Aorta (tissue), 5 donors: ENCODE measurements at regions of chr9 and their contacts with region 1.

Region 1: GRCh38 chr9:93134015-93134739 is at the start of gene NINJ1:
- DNase-seq: peak; percentile 83 to 91
- ATAC-seq: peak; percentile 90
- H3K4me3 ChIP-seq: peak within 1 kb of the TSS; percentile 64 to 87
- H3K27ac ChIP-seq: peak within 1 kb of the TSS; percentile 88 to 97
- H3K4me1 ChIP-seq: no peaks in the 10 kb centered on the region
- H3K27me3 ChIP-seq: no peaks in the 10 kb centered on the region
- total RNA-seq, gene NINJ1: 66.8 to 80.3 TPM

Region 2: GRCh38 chr9:92747459-92748232 is 386.5 kb before region 1 on chr9:
- intact Hi-C with region 1: no loop called
- DNase-seq: peak in 1 of 2 donors; percentile 76
- ATAC-seq: peak; percentile 16
- H3K4me3 ChIP-seq: no peak overlapping the region
- H3K27ac ChIP-seq: no peak overlapping the region
- H3K4me1 ChIP-seq: no peaks in the 10 kb centered on the region
- H3K27me3 ChIP-seq: no peaks in the 10 kb centered on the region

Region 3: GRCh38 chr9:93453047-93453914 is 319.1 kb after region 1 on chr9 and contains the start of gene FAM120AOS:
- intact Hi-C with region 1: loop called in 1 of 2 experiments (anchors 10 kb)
- DNase-seq: peak; percentile 95
- ATAC-seq: peak; percentile 91
- H3K4me3 ChIP-seq: peak within 1 kb of the TSS; percentile 93 to 98
- H3K27ac ChIP-seq: peak within 1 kb of the TSS; percentile 64 to 79
- H3K4me1 ChIP-seq: peaks cover 2% of the 10 kb centered on the region in 2 donors
- H3K27me3 ChIP-seq: no peaks in the 10 kb centered on the region
- total RNA-seq, gene FAM120AOS: 38.3 to 40.1 TPM

Region 4: DNA sequence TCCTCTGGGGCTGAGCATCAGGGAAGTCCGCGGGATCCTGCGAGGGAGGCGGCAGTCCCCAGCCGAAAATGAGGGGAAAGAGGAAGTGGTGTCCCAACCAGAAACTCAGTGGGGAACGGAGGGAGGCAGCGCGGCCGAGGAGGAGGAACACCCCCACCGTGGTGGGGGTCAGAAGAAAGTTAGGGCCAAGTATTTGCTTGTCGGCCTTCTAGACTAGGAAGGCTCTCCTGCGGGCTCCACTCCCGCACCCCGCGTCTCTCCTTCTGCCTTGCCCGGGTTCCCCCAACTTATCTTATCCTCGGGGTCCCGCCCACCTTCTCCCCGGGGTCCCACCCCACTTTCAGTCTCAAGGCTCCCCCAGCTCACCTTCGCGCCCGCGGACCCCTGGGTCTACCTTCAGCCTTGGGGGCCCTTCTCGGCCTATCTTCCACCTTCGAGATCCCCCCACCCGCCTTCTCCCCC is 441.6 kb after region 1 on chr9:
- intact Hi-C with region 1: loop called in 1 of 2 experiments (anchors 10 kb)
- DNase-seq: peak; percentile 81 to 84
- ATAC-seq: peak; percentile 47
- H3K4me3 ChIP-seq: peak overlapping the region; percentile 90 to 95
- H3K27ac ChIP-seq: peak overlapping the region; percentile 66 to 76
- H3K4me1 ChIP-seq: no peaks in the 10 kb centered on the region
- H3K27me3 ChIP-seq: no peaks in the 10 kb centered on the region